ENCODE measurements at regions of chr5 and their contacts with region 1.

Region 1: GRCh38 chr5:97142521-97143254 is at the start of gene LIX1:
- DNase-seq: peak in 8 of 10 donors; percentile 33 to 91 (median 50)

Region 2: GRCh38 chr5:96868603-96869371 is 273.9 kb before region 1 on chr5:
- intact Hi-C with region 1: loop called (anchors 5 kb)
- DNase-seq: no peak

Region 3: DNA sequence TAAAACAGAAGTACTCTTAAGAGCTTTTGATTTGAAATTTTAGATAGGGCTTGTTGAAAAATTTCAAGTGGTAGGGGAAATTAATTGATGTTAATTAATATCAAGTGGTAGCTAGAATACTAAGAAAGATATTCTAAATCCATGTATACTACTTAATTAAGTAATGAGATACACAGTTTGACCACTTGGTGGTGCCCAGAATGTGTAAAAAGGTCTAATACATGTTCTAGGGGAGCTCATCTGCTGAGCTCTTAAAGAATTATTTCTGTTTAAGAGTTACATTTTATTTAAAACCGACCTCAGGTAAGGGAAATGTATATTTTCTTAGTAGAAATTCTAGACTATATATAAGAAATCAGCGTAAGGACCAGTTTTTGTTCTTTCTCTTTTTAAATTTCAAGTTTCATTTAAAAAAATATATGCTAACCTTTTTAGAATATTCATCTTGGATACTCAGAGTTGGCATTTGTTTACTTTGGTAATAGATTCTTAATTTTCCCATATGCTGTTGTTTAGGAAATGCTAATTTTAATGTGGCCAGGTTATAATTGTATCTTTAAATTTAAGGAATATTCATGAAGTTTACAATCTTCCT is 145.3 kb before region 1 on chr5:
- intact Hi-C with region 1: loop called (anchors 5 kb)
- DNase-seq: no peak